Cardiac septum (tissue), 1 donor: ENCODE measurements at regions of chr6 and their contacts with region 1.

Region 1: GRCh38 chr6:81752138-81752920 is at the start of gene TENT5A:
- DNase-seq: peak; percentile 97
- total RNA-seq, gene TENT5A: 35.2 TPM

Region 2: DNA sequence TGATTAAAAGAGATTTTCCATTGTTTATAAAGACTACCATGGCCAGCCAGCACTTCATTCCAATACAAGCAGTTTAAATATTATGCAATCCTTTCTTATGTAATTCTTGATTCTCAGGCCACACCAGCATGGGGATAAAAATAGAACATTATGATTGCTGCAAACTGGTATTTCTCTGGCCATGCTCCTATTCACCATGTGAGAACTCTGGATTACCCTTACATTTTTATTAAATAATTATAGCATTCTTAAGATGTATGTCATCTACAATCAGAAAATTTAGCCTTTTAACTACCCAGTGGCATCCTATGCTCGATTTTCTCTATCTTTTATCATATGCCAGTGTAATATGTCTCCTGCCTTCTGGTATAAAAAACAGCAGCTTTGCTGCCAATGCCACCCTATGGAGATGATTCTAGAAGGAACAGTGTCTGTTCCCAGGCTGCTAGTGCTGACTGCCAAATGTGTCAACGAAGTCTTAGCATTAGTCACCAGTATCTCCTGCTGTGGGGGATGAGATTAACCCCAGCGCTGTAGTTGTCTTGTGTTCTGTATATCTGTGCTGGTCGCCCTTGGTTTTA is 1144.4 kb before region 1 on chr6:
- intact Hi-C with region 1: loop called (anchors 2 kb)
- DNase-seq: no peak

Region 3: DNA sequence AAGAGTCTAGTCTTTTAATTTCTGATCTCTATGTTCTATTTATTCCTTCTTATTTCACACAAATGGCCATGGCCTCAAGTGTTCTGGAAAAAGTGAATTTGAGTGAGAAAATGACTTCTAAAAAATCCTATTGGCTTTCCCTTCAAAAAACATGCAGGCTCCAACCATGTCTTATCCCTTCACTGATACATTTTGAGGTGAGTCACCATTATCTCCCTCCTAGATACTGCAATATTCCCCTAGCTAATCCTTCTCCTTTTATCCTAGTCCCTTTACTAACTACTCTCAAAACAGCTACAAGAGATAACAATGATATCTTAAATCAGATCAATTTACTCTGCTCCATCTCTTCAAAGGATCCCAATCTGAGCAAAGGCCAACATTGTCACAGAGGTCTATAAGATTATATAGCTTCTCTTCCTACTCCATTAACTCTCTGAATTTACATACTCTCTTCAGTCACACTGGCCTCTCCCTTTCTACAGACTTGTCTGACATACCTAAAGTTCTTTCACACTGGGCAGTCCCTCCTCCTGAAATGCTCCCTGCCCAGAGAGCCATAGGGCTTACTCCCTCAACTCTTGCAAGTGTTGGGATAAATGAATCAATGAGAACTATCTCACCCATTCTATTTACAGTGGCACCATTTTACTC is 129.1 kb before region 1 on chr6:
- intact Hi-C with region 1: loop called (anchors 5 kb)
- DNase-seq: no peak

Region 4: GRCh38 chr6:81708113-81708699 is 44.1 kb before region 1 on chr6:
- intact Hi-C with region 1: loop called (anchors 5 kb)
- DNase-seq: no peak

Region 5: DNA sequence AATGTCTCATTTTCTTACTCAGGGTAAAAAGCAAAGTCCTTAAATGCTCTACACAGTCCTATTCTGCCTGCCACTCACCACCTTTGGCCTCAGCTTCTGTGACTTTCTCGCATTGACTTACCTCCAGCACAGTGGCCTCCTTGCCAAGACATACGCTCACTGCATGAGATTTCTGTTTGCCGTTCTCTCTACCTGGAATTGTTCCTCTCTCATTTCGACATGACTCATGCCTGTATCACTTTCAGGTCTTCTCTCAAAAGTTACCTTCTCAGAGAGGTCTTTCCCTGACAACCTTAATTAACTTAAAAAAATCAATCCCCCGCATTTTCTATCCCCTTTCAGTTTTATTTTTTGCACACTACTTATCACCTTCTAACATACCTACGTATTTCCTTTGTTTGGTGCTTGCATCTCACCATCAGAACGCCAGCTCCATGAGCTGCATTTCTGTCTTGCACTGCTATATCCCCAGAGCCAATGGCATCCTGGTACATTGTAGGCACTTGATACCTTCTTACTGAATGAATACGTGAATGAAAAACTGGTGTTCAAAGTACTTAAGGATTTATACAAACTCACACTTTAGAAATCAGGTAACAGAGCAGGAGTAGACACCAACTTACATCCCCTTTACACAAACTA is 24.3 kb before region 1 on chr6:
- intact Hi-C with region 1: no loop called
- DNase-seq: no peak

Region 6: DNA sequence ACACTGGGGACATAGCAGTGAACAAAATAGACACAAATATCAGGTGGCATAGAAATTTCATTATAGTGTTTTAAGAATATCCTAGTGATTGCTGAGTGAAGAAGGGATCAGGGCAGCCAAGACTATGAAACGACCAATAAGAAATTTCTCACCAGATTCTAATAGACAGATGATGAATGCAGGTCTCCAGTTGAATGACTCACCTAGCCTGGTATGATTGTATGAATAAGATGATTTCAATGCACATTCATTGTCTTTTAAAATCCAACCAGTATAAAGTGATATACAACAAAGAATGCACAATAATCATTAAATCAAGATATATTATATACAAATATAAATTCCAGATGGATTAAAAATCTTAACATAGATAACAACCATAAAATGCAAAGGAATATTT is 124.6 kb after region 1 on chr6:
- intact Hi-C with region 1: no loop called
- DNase-seq: no peak

Region 7: GRCh38 chr6:81981812-81982211 is 229.5 kb after region 1 on chr6:
- intact Hi-C with region 1: loop called (anchors 5 kb)
- DNase-seq: no peak

Region 8: GRCh38 chr6:82040405-82041221 is 288.3 kb after region 1 on chr6:
- intact Hi-C with region 1: loop called (anchors 5 kb)
- DNase-seq: no peak

Region 9: DNA sequence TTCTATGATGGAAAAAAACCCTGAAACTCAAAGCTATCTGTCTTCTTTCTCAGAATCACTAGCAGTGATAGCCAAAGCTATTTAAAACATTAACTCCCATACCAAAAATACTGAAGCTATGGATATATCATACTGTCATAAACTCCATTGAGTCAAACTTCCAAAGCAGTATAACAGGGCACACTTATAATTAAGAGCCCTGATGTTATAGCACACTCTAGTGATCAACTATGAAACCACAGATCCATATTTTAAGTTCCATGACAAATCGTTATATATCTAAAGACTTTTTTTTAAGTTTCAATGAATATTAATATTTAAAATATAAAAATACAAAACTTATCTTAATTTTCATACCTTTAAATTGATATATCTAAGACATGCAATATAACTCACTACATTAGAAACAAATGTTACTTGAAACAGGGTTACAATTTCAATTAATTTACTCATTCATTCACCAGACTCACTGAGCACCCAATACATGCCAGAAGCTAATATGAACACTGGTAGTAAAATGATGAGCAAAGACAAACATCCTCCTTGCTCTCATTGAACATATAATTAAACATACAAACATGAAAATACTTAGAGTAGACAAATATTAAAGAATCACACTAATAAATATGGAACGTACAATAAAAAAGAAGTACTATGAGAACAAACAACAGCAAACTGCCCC is 425.9 kb after region 1 on chr6:
- intact Hi-C with region 1: loop called (anchors 5 kb)
- DNase-seq: no peak